Sigmoid colon (tissue), 7 donors: ENCODE measurements at regions of chr12 and their contacts with region 1.

Region 1: DNA sequence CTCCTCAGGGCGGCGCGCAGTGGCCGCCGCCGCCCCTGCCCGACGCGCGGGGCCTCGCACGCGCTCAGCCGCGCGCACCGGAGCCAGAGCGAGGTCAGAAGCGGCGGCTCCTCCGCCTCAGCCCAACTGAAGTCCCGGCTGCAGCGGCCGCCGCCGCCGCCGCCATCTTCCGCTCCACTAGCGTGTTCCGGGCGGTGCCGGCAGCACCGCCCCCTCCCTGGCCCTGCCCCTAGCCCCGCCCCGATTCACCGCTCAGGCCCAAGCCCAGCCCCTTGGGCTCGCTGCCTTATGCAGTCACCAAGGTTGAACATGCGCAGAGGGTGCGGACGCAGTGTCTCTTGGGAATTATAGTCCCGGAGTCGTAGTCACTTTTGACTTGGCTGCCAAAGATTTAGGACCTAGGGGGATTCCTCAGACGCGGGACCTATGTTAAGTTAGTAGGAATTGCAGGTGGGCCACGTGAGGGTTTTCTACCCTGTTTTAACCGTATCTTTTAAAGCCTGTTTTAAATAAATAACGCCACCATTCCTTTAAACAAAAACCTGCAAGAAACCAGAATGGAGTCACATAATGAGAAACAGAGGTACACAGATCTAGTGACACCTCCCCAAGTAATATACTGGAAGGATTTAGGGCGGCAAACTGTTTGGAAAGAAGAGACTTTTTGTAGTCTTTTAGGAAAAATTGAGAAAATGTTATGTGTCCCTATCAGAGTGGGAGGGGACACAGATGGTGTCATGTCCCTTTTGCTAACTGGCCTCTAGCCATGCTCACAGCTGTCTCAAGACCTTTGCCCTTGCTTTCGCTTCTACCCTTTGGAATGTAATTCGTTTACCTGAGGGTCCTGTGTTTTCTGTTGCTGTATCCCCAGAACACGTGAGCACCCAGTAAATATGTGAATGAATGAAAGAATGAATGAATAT is at the start of gene PPTC7:
- DNase-seq: peak; percentile 98
- H3K4me3 ChIP-seq: peak within 1 kb of the TSS; percentile 84 to 93 (median 92)
- H3K27ac ChIP-seq: peak within 1 kb of the TSS; percentile 95 to 97 (median 96)
- H3K4me1 ChIP-seq: peaks cover 0 to 62% (median 59%) of the 10 kb centered on the region in 4 donors
- H3K27me3 ChIP-seq: no peaks in the 10 kb centered on the region
- CTCF ChIP-seq: no peak
- EP300 ChIP-seq: no peak
- POLR2A ChIP-seq: peak in 1 of 2 donors; percentile 58
- total RNA-seq, gene PPTC7: 19.4 to 30.3 (median 22.5) TPM

Region 2: GRCh38 chr12:110543252-110543959 is 40.0 kb before region 1 on chr12:
- intact Hi-C with region 1: loop called (anchors 5 kb)
- DNase-seq: peak; percentile 98
- H3K4me3 ChIP-seq: no peak overlapping the region
- H3K27ac ChIP-seq: peak overlapping the region; percentile 82 to 88 (median 83)
- H3K4me1 ChIP-seq: peaks cover 0 to 68% (median 56%) of the 10 kb centered on the region in 4 donors
- H3K27me3 ChIP-seq: no peaks in the 10 kb centered on the region
- CTCF ChIP-seq: no peak
- EP300 ChIP-seq: peak in 1 of 4 donors; percentile 58
- POLR2A ChIP-seq: no peak